ENCODE measurements at regions of chr11 and their contacts with region 1.

Region 1: DNA sequence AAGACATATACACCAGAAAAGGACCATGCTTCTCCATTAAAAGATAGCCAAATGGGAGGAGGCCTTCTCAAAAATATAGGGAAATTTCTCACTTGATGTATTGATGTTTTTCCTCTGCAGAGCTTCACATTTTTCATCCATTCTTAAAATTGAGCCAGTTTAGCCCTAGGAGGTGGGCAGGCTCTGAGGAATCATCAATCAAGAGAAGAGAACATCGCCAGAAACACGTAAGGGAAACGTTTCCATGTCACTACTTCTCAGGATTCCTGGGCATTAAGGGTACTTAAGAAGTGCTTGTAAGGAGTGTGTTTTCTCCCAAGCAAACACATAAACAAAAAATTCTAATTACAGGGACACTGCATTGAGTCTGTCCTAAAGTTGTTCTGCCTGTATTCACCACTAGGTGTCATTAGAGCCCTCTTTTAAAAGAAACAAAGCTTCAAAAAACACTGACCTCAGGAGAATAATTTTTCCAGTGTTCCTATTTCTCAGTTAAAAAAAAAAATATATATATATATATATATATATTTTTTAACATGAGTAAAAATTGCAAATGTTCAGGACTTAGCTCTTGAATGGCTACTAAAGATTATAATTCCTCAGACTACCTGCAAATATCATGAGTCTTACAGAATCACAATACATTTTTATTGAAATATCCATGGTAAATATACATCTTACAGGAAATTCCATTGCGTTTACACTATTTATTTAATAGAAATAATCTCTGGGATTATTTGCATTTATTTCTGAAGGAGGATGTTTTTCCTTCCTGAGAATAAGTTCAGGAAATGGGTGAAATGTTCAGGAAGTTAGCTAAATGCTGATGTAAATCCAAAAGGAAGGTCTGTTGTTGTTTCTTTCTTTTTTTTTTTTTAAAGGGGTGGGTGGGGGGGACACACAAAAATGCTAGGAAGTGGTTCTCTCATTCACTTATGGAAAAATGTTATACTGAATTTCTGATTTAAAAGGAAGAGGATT is 16.0 kb downstream of the FZD4 start:
- DNase-seq: peak; percentile 85
- H3K4me3 ChIP-seq: peak overlapping the region in 1 of 3 experiments; percentile 25
- H3K27ac ChIP-seq: peak overlapping the region; percentile 89
- H3K4me1 ChIP-seq: peaks cover 73% of the 10 kb centered on the region
- H3K27me3 ChIP-seq: no peaks in the 10 kb centered on the region
- CTCF ChIP-seq: peak; percentile 41 to 49
- POLR2A ChIP-seq: peak; percentile 1

Region 2: GRCh38 chr11:86869966-86870570 is 69.1 kb before region 1 on chr11:
- CTCF ChIA-PET with region 1: interaction called, 18 read pairs
- POLR2A ChIA-PET with region 1: no interaction called
- dilution Hi-C with region 1: no loop called
- intact Hi-C with region 1: loop called (anchors 1 kb)
- DNase-seq: peak; percentile 67
- H3K4me3 ChIP-seq: no peak overlapping the region
- H3K27ac ChIP-seq: peak overlapping the region; percentile 16
- H3K4me1 ChIP-seq: no peaks in the 10 kb centered on the region
- H3K27me3 ChIP-seq: no peaks in the 10 kb centered on the region
- CTCF ChIP-seq: peak; percentile 69 to 70
- POLR2A ChIP-seq: no peak

Region 3: GRCh38 chr11:86969258-86969657 is 30.1 kb after region 1 on chr11:
- CTCF ChIA-PET with region 1: interaction called, 6 read pairs
- POLR2A ChIA-PET with region 1: no interaction called
- dilution Hi-C with region 1: no loop called
- intact Hi-C with region 1: loop called (anchors 1 kb)
- DNase-seq: peak; percentile 90
- H3K4me3 ChIP-seq: no peak overlapping the region
- H3K27ac ChIP-seq: peak overlapping the region; percentile 65
- H3K4me1 ChIP-seq: peaks cover 15% of the 10 kb centered on the region
- H3K27me3 ChIP-seq: no peaks in the 10 kb centered on the region
- CTCF ChIP-seq: no peak
- POLR2A ChIP-seq: no peak

Region 4: DNA sequence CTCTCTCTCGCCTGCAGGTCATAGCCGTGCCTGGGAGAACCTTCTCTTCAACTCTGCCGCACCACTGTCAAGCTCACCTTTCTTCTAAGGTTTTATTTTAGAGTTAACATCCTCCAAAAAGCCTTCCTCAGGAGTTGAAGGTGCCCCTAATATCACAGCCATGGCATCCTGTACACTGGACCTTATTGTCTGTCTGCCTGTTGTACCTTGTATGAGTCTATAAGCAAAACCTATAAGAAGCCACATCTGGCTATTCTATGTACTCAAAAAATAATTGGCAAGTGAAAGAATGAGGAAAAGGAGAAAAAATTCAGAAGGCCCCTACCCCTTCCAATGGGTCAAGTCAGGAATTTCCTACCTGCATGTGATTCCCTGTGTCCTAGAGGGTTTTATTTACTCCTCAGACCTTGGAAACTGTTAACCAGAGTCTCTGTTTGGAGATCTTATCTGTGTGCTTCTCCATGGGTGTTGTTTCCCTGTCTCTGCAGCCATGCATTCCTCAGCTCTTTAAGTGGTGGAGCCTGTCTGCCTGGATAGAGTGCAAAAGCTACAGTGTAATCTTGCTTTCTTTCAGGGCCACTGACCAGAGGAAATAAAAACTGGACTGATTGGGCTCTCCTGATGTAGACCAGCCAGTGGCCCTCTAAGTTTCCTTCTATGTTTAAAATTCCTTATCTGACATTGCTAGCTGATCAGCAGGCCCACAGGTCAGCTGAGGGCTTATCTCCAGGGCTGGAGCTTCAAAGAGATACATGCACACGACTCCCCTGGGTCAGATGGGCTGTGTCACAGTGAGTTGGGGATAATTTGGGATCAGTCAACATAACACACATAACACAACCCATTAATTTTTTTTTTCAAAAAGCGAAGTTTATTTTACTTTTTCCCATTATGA is 60.9 kb after region 1 on chr11:
- CTCF ChIA-PET with region 1: interaction called, 78 read pairs
- POLR2A ChIA-PET with region 1: no interaction called
- dilution Hi-C with region 1: no loop called
- intact Hi-C with region 1: loop called (anchors 1 kb)
- DNase-seq: peak; percentile 31
- H3K4me3 ChIP-seq: no peak overlapping the region
- H3K27ac ChIP-seq: no peak overlapping the region
- H3K4me1 ChIP-seq: no peaks in the 10 kb centered on the region
- H3K27me3 ChIP-seq: no peaks in the 10 kb centered on the region
- CTCF ChIP-seq: no peak
- POLR2A ChIP-seq: no peak

Region 5: GRCh38 chr11:87173185-87174039 is 234.2 kb after region 1 on chr11:
- CTCF ChIA-PET with region 1: interaction called, 12 read pairs
- POLR2A ChIA-PET with region 1: no interaction called
- dilution Hi-C with region 1: no loop called
- intact Hi-C with region 1: loop called (anchors 5 kb)
- DNase-seq: peak; percentile 94
- H3K4me3 ChIP-seq: no peak overlapping the region
- H3K27ac ChIP-seq: peak overlapping the region; percentile 70
- H3K4me1 ChIP-seq: peaks cover 25% of the 10 kb centered on the region
- H3K27me3 ChIP-seq: no peaks in the 10 kb centered on the region
- CTCF ChIP-seq: no peak
- POLR2A ChIP-seq: no peak

Region 6: GRCh38 chr11:87290304-87290922 is 351.2 kb after region 1 on chr11:
- CTCF ChIA-PET with region 1: interaction called, 45 read pairs
- POLR2A ChIA-PET with region 1: no interaction called
- dilution Hi-C with region 1: no loop called
- intact Hi-C with region 1: loop called (anchors 1 kb)
- DNase-seq: peak; percentile 75
- H3K4me3 ChIP-seq: no peak overlapping the region
- H3K27ac ChIP-seq: no peak overlapping the region
- H3K4me1 ChIP-seq: peaks cover 2% of the 10 kb centered on the region
- H3K27me3 ChIP-seq: no peaks in the 10 kb centered on the region
- CTCF ChIP-seq: peak in 1 of 2 donors; percentile 34
- POLR2A ChIP-seq: no peak

Region 7: GRCh38 chr11:87421422-87421821 is 482.2 kb after region 1 on chr11:
- CTCF ChIA-PET with region 1: interaction called, 55 read pairs
- POLR2A ChIA-PET with region 1: no interaction called
- dilution Hi-C with region 1: no loop called
- intact Hi-C with region 1: loop called (anchors 1 kb)
- DNase-seq: peak; percentile 91
- H3K4me3 ChIP-seq: no peak overlapping the region
- H3K27ac ChIP-seq: no peak overlapping the region
- H3K4me1 ChIP-seq: peaks cover 16% of the 10 kb centered on the region
- H3K27me3 ChIP-seq: no peaks in the 10 kb centered on the region
- CTCF ChIP-seq: peak; percentile 67 to 75
- POLR2A ChIP-seq: no peak

Measured in endothelial cell of umbilical vein (primary cell).